ENCODE measurements at regions of chr1 and their contacts with region 1.

Region 1: GRCh38 chr1:192580351-192580962 is 4.9 kb downstream of the RGS1 start:
- DNase-seq: no peak
- H3K4me3 Mint-ChIP-seq: peak overlapping the region; percentile 7
- H3K27ac Mint-ChIP-seq: no peak overlapping the region
- H3K4me1 Mint-ChIP-seq: peaks cover 39% of the 10 kb centered on the region
- H3K27me3 Mint-ChIP-seq: peaks cover 8% of the 10 kb centered on the region

Region 2: GRCh38 chr1:192327997-192328396 is 252.5 kb before region 1 on chr1:
- intact Hi-C with region 1: no loop called
- DNase-seq: no peak
- H3K4me3 Mint-ChIP-seq: no peak overlapping the region
- H3K27ac Mint-ChIP-seq: no peak overlapping the region
- H3K4me1 Mint-ChIP-seq: no peaks in the 10 kb centered on the region
- H3K27me3 Mint-ChIP-seq: no peaks in the 10 kb centered on the region

Region 3: DNA sequence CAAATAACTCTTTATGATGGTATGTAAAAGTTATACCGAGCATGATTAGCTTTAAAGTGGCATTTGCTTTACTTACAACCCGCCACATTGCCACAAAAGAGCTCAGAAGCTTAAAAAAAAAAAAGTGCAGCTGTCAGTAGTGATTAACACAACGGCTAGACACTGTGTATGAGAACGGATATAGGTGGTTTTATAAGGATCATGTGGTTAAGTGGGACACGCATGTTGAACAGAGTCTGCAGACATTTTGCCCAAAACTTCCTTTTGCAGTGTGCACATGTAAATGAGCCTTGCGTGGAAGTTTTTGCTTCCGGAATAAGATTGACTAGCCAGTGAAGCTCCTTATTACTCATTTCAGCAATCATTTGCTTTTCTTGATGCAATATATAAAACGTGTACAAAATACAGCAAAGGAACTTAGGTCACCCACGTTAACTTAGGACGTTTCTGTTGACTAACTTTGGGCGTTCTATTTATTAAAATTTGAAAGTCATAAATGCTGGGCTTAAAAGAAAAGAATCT is 63.6 kb before region 1 on chr1:
- intact Hi-C with region 1: loop called (anchors 1 kb)
- DNase-seq: peak; percentile 69
- H3K4me3 Mint-ChIP-seq: peak overlapping the region; percentile 66
- H3K27ac Mint-ChIP-seq: peak overlapping the region; percentile 77
- H3K4me1 Mint-ChIP-seq: peaks cover 55% of the 10 kb centered on the region
- H3K27me3 Mint-ChIP-seq: peaks cover 2% of the 10 kb centered on the region

Region 4: GRCh38 chr1:192539297-192540092 is 41.0 kb before region 1 on chr1:
- intact Hi-C with region 1: loop called (anchors 2 kb)
- DNase-seq: no peak
- H3K4me3 Mint-ChIP-seq: no peak overlapping the region
- H3K27ac Mint-ChIP-seq: peak overlapping the region; percentile 72
- H3K4me1 Mint-ChIP-seq: peaks cover 52% of the 10 kb centered on the region
- H3K27me3 Mint-ChIP-seq: no peaks in the 10 kb centered on the region

Region 5: DNA sequence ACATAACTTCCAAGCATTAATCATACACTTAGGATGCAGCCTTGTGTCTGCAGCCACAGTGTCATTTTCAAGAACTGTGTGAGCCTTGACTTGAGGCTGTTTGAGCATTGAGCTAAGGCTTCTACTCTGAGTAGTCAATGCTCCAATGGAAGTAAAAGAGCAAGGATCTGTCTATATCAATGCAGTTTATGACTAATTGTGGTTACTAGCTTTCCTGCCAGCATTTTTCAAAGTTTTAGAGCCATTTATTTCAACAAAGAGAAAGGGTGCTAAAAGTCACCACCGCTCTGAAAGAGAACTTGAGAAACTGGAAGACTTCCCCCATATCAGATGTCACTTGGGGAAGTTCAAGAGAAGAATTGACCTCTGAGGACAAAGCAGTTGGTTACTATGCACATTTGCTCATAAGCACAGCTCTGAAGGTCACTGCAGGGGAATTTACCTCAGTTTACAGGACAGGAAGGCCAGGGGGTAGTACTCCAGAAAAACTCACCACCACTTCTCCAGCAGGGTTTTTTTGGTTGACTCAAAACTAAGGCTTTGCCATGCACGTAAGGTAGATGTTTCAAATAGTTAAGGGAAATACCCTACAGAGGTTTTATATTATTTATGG is 29.4 kb before region 1 on chr1:
- intact Hi-C with region 1: loop called (anchors 1 kb)
- DNase-seq: no peak
- H3K4me3 Mint-ChIP-seq: no peak overlapping the region
- H3K27ac Mint-ChIP-seq: peak overlapping the region; percentile 64
- H3K4me1 Mint-ChIP-seq: peaks cover 60% of the 10 kb centered on the region
- H3K27me3 Mint-ChIP-seq: no peaks in the 10 kb centered on the region

Region 6: DNA sequence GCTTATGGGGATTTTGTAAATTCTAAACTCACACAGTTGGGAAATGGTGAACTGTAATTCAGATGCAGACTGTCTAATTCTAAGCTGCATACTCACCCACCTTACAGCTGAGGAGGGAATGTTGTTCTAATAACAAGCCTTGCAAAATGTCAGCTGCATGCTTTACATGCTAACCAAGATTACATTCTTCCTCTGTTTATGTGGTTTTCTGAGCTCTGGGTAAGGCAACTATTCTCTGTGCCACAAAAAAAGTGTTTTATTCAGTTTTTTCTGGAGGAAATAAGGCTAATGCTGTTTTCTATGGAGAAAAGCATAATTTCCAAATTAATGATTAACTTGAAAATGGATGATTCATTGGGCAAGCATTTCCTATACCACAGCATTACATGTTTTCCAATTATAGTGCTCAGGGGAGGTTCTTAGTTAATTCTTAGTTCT is 120.4 kb after region 1 on chr1:
- intact Hi-C with region 1: loop called (anchors 1 kb)
- DNase-seq: no peak
- H3K4me3 Mint-ChIP-seq: no peak overlapping the region
- H3K27ac Mint-ChIP-seq: no peak overlapping the region
- H3K4me1 Mint-ChIP-seq: peaks cover 17% of the 10 kb centered on the region
- H3K27me3 Mint-ChIP-seq: peaks cover 3% of the 10 kb centered on the region